ENCODE measurements at regions of chr2 and their contacts with region 1.

Region 1: DNA sequence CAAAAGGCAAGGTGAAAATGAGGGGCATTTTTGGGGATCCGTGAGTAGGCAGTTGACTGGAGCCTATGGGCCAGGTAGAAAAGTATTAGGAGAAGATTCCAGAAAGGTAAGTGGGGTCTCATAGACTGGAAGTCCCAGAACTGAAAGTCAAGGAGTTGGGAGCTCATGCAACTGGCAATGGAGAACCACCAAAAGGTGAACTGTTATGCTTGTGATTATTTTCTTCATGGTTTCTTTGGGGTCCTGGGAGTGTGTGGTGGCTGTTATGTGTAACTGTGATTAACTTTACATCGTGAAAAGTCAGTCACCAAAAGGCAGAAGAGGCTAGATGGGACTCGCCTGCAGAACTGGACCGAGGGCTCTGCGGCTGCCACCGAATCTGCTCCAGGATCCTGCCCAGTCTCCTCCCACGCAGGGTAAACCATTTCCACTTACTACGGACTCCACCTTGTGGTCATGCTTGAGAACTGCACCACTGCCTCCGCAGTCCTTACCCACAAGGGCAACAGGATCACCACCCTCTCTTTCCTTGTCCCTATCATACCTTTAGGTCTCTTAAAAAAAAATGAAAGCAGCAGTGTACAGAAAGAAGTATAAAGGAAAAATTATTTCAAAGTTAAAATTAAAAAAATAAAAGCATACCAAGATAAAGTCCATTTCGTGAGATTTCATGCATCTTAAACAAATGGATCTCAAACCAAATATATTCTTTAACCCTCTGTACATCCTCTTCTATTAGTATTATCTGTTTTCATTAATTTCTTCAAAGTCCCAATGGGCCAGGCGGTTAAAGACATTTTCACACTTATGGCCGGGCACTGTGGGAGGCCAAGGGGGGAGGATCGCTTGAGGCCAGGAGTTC is 15.6 kb upstream of the CEP68 start:
- DNase-seq: peak; percentile 78 to 86
- H3K4me3 ChIP-seq: no peak overlapping the region
- H3K4me1 ChIP-seq: no peaks in the 10 kb centered on the region
- H3K27me3 ChIP-seq: no peaks in the 10 kb centered on the region

Region 2: DNA sequence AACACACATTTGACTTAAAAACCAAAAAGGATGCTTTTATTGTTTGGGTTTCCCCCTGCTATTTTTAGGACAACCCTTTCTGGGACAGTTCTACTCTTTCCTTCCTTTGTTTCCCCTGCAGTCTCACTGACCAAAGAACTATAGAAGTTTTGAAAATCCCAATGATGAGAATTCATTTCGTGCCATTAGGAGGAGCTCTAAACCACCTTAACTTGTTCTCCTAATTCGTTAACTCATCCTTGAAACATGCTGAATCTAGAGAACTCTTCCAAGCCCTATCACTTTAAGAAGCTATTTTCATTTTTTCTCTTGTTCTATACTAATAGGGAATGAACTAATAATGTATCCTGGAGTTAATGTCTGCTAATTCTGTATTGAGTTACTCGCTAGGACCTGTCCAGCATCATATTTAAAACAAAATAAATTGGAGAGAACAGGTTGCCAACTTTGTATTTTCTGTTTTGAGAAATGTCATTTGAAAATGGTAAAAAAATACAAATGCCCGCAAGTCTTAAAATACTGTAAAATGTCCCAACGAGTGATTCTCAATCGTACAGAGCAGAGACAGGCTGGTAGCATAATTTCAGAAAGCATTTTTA is 453.6 kb before region 1 on chr2:
- in situ Hi-C with region 1: loop called (anchors 25 kb)
- DNase-seq: peak in 1 of 2 experiments; percentile 77
- H3K4me3 ChIP-seq: no peak overlapping the region
- H3K4me1 ChIP-seq: no peaks in the 10 kb centered on the region
- H3K27me3 ChIP-seq: no peaks in the 10 kb centered on the region

Measured in HAP-1 (cell line).